Heart left ventricle (tissue), 16 donors: ENCODE measurements at regions of chr15 and their contacts with region 1.

Region 1: DNA sequence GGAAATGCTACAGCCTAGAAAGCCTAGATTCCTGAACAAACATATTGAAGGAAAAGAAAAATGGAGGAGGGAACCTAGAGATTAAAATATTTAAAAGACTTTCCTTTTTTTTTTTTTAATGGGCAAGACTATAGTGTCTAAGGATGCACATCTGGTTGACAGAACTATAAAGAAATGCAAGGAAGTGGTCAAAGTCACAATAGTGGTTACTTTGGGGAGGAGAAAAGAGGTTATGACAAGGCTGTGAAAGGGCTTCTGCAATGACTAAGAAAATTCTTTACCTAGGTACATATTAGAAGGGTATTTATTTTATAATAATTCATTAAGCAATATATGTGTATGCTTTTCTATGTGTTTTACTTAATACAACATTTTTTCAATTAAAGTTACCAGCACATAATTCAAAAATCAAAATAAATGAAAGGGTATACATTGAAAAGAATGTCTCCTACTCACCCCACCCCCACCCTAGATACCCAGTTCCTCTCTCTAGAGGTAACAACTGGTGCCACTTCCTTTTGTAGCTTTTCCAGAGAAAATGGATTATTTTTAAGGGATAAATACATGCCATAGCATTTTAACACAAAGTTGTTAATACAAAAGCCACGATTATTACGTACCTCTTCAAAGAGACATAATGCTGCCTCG is 70.1 kb downstream of the HERC1 start:
- DNase-seq: no peak
- ATAC-seq: no peak
- H3K4me3 ChIP-seq: no peak overlapping the region
- H3K27ac ChIP-seq: no peak overlapping the region
- H3K4me1 ChIP-seq: peaks cover 0 to 64% (median 42%) of the 10 kb centered on the region in 12 donors
- H3K27me3 ChIP-seq: no peaks in the 10 kb centered on the region
- CTCF ChIP-seq: no peak
- POLR2A ChIP-seq: no peak

Region 2: DNA sequence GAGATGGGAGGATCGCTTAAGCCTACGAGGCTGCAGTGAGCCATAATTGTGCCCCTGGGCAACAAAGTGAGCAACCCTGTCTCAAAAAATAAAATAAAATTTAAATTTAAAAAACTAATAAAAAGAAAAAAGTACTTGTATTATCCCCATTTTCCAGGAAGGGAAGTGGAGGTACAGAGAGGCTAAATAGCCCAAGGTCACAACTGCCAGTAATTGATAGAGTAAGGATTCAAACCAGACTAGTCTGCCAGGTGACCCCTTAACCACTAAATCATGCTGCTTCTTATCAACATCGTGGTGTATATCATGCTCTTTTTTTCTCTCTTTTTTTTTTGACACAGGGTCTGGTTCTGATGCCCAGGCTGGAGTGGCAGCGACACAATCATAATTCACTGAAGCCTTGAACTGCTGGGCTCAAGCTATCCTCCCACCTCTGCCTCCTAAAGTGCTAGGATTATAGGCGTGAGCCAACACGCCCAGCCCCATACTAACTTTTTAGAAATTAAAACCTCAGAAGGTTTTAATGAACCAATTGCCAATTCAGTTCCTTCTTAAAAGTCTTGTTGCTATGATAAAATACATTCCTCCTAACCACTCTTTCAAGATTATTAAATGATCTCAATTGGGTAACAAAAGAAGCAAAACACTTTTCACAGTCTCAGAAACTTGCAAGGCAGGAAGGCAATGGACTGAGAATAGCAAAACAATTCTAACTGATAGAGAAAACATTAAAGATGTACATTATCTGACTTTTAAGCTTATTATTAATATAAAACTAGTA is 39.7 kb after region 1 on chr15:
- intact Hi-C with region 1: loop called in 1 of 10 experiments (anchors 5 kb)
- DNase-seq: no peak
- ATAC-seq: no peak
- H3K4me3 ChIP-seq: no peak overlapping the region
- H3K27ac ChIP-seq: no peak overlapping the region
- H3K4me1 ChIP-seq: peaks cover 0 to 89% (median 49%) of the 10 kb centered on the region in 12 donors
- H3K27me3 ChIP-seq: no peaks in the 10 kb centered on the region
- CTCF ChIP-seq: no peak
- POLR2A ChIP-seq: no peak

Region 3: DNA sequence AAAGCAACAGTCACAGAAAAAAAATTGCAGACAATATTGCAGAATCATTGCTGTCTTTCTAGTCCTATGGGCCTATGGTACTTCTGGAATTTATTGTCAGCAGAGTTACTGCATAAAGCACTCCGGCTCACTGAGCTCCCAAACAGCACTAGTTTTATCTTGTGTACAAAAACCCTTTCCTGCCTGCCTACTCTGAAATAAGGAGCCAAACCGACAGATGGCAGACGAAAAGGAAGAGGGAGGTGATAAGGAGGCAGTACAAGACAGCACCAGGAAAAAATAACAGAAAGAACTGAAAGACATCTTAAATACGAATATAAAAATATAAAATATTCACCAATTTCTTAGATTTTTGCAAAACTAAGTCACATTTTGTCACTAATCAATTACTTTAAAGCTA is 54.6 kb after region 1 on chr15:
- intact Hi-C with region 1: loop called in 1 of 10 experiments (anchors 10 kb)
- DNase-seq: no peak
- ATAC-seq: peak in 2 of 4 donors; percentile 34 to 65
- H3K4me3 ChIP-seq: no peak overlapping the region
- H3K27ac ChIP-seq: peak overlapping the region in 1 of 12 donors; percentile 1
- H3K4me1 ChIP-seq: peaks cover 0 to 84% (median 62%) of the 10 kb centered on the region in 12 donors
- H3K27me3 ChIP-seq: no peaks in the 10 kb centered on the region
- CTCF ChIP-seq: peak in 1 of 12 donors; percentile 7
- POLR2A ChIP-seq: no peak

Region 4: DNA sequence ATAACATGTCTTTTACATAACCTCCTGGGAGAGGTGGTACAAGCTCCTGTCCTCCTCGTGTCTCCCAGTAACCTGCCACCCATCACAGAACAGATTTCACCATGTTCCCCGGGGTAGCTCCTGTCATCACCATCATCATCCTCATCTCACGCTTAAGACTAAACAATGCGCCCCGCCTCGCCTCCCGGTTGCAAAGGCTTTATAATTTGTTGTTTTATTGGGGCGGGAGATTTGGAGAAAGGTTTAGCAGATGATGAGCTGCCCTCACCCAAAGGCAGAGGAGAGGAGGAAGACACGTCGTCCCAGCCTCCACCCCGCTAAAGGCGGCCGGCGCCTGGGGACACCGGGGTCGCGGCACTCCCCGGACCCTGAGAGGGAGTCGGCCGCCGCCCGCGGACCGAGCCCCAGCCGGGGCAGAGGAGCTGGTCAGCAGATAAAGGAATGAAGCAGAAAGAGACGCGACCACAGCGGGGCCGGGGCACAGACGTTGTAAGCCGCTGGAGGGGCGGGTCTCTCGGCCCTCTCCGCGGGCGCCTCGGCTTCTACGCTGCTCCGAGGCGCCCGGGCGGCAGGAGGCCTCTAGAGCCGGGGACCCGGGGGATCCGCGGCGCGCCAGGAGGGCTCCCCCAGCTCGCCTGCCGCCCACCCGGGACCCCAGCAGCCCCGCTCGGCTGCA is 69.6 kb after region 1 on chr15:
- intact Hi-C with region 1: loop called in 4 of 10 experiments (anchors 5 to 10 kb)
- DNase-seq: peak in 4 of 5 donors; percentile 32 to 76 (median 42)
- ATAC-seq: peak in 3 of 4 donors; percentile 28 to 75 (median 71)
- H3K4me3 ChIP-seq: peak overlapping the region; percentile 48 to 95 (median 84)
- H3K27ac ChIP-seq: peak overlapping the region; percentile 88 to 98 (median 93)
- H3K4me1 ChIP-seq: peaks cover 0 to 50% (median 34%) of the 10 kb centered on the region in 12 donors
- H3K27me3 ChIP-seq: no peaks in the 10 kb centered on the region
- CTCF ChIP-seq: no peak
- POLR2A ChIP-seq: no peak

Region 5: GRCh38 chr15:63891079-63891767 is 127.6 kb after region 1 on chr15:
- intact Hi-C with region 1: loop called in 1 of 10 experiments (anchors 5 kb)
- DNase-seq: peak; percentile 73 to 88 (median 80)
- ATAC-seq: peak; percentile 24 to 86 (median 80)
- H3K4me3 ChIP-seq: no peak overlapping the region
- H3K27ac ChIP-seq: peak overlapping the region in 1 of 12 donors; percentile 63
- H3K4me1 ChIP-seq: peaks cover 0 to 72% (median 5%) of the 10 kb centered on the region in 12 donors
- H3K27me3 ChIP-seq: no peaks in the 10 kb centered on the region
- CTCF ChIP-seq: peak; percentile 80 to 94 (median 87)
- POLR2A ChIP-seq: no peak